Activated T-helper 2 cell treated with anti-CD3 and anti-CD28 coated beads, Interferon-gamma antibody, Interleukin-2, Interleukin-4, amounts not matched to agents 10 μg/mL and 5 μg/mL and 100 μg/mL, durations not matched to agents 14 hours and 24 hours and 36 hours (primary cell): ENCODE measurements at regions of chr17 and their contacts with region 1.

Region 1: GRCh38 chr17:7687908-7688807 is at the start of gene WRAP53:
- DNase-seq: peak; percentile 93
- H3K4me3 Mint-ChIP-seq: peak within 1 kb of the TSS; percentile 94
- H3K27ac Mint-ChIP-seq: peak within 1 kb of the TSS; percentile 97
- H3K4me1 Mint-ChIP-seq: peaks cover 34% of the 10 kb centered on the region
- H3K27me3 Mint-ChIP-seq: no peaks in the 10 kb centered on the region
- total RNA-seq, gene WRAP53: 33.2 and 34.5 TPM in 2 replicates

Region 2: DNA sequence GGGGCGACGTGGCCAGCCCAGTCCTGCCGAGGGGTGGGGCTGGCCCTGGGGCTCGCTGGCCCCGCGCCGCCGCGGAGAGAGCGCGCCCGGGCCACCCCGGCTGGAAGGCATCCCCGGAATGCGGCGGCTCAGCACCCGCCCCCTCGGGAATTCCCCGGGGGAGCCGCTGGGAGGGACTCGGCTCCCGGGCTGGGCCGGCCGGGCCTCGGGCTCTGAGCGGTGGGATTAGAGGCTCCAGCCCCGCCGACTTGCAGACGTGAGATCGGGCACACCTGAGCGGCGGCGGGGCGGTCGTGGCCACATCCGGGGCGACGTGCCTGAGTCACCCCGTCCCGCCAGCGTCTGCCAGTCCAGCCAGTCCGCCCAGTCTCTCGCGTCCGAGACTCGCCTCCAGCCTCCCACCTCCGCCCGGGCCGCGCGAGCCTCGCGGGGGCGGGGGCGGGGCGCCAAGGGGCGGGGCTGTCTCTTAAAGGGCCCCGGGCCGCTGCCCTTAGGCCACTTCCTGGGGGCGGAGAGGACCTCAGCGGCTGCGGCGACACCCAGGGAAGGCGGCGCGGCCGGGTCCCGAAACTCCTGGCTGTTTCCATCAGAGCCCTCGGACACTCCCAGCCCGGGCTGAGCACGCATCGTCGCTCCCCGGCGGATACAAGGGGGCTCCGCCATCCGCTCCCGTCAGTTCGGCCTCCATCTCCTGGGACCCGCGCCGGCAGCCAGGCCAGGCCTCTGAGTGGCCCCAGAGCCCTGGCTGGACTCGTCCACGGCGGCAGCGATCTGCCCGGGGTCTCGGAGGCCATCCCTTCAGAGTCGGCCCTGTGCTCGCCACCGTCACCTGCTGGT is 336.3 kb before region 1 on chr17 and contains the start of gene KCTD11:
- intact Hi-C with region 1: loop called (anchors 5 kb)
- DNase-seq: peak; percentile 74
- H3K4me3 Mint-ChIP-seq: peak within 1 kb of the TSS; percentile 90
- H3K27ac Mint-ChIP-seq: peak within 1 kb of the TSS; percentile 87
- H3K4me1 Mint-ChIP-seq: peaks cover 32% of the 10 kb centered on the region
- H3K27me3 Mint-ChIP-seq: no peaks in the 10 kb centered on the region
- total RNA-seq, gene KCTD11: 8.0 and 8.5 TPM in 2 replicates

Region 3: DNA sequence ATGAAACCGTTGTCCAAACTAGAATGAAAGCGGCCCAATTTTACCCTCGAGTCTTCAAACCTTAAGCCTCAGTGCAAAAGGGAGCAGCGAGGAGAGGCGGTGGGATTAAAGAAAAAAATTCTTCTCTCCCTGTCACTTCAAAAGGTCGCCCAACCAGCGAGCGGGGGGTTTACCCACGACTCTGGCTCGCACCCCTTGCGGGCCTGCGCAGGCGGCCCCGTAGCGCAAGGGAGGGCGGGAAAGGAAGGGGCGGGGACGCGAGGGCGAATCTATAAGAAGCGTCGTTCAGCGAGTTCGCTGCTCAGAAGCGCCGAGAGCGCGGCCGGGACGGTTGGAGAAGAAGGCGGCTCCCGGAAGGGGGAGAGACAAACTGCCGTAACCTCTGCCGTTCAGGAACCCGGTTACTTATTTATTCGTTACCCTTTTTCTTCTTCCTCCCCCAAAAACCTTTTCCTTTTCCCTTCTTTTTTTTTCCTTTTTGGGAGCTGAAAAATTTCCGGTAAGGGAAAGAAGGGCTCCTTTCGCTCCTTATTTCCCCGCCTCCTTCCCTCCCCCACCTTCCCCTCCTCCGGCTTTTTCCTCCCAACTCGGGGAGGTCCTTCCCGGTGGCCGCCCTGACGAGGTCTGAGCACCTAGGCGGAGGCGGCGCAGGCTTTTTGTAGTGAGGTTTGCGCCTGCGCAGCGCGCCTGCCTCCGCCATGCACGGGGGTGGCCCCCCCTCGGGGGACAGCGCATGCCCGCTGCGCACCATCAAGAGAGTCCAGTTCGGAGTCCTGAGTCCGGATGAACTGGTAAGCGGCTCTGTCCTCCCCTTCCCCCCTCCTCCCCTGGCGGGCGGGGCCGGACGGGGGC is 203.9 kb before region 1 on chr17 and contains the start of gene POLR2A:
- intact Hi-C with region 1: loop called (anchors 10 kb)
- DNase-seq: peak; percentile 95
- H3K4me3 Mint-ChIP-seq: peak within 1 kb of the TSS; percentile 98
- H3K27ac Mint-ChIP-seq: peak within 1 kb of the TSS; percentile 99
- H3K4me1 Mint-ChIP-seq: peaks cover 49% of the 10 kb centered on the region
- H3K27me3 Mint-ChIP-seq: no peaks in the 10 kb centered on the region
- total RNA-seq, gene POLR2A: 247 and 261 TPM in 2 replicates

Region 4: GRCh38 chr17:7632492-7632894 is 55.7 kb before region 1 on chr17:
- intact Hi-C with region 1: loop called (anchors 1 kb)
- DNase-seq: peak; percentile 25
- H3K4me3 Mint-ChIP-seq: no peak overlapping the region
- H3K27ac Mint-ChIP-seq: no peak overlapping the region
- H3K4me1 Mint-ChIP-seq: peaks cover 7% of the 10 kb centered on the region
- H3K27me3 Mint-ChIP-seq: no peaks in the 10 kb centered on the region

Region 5: GRCh38 chr17:8125157-8125946 is 437.2 kb after region 1 on chr17:
- intact Hi-C with region 1: loop called (anchors 2 kb)
- DNase-seq: peak; percentile 78
- H3K4me3 Mint-ChIP-seq: peak overlapping the region; percentile 87
- H3K27ac Mint-ChIP-seq: peak overlapping the region; percentile 78
- H3K4me1 Mint-ChIP-seq: peaks cover 47% of the 10 kb centered on the region
- H3K27me3 Mint-ChIP-seq: peaks cover 42% of the 10 kb centered on the region